GM10248 (cell line): ENCODE measurements at regions of chr3 and their contacts with region 1.

Region 1: DNA sequence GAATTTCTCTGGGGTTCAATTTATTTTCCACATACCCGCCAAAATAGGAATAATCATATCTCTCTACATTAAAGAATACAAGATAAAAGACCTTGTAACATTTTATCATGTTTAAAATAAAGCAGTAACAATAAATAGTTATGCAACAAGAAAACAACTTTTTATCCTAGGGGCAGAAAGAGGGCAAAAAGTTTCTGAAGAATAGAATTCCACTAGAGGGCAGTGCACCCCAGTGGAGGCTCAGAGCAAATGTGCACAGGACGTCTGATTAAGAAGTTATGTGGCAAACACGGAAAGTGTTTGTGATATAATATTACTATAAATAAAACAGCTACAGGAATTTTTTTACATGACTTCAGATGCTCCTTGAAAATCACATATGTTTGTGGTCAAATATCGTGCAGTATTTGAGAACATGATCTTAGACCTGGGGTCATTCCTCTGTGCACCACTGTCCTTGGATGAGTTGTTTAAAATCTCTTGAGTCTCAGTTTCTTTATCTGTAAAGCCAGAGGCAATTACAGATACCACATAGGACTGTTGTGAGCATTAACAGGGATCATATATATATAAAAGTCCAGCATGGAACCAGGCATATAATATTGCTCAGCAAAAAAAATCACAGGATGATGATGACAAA is 13.2 kb upstream of the PIK3R4 start:
- DNase-seq: peak; percentile 67
- CTCF ChIP-seq: peak; percentile 51

Region 2: GRCh38 chr3:130707902-130708601 is 51.8 kb before region 1 on chr3:
- CTCF ChIA-PET with region 1: no interaction called
- POLR2A ChIA-PET with region 1: no interaction called
- DNase-seq: no peak
- CTCF ChIP-seq: no peak

Region 3: GRCh38 chr3:130748981-130749380 is 10.8 kb before region 1 on chr3:
- CTCF ChIA-PET with region 1: interaction called, 12 read pairs
- POLR2A ChIA-PET with region 1: no interaction called
- DNase-seq: no peak
- CTCF ChIP-seq: no peak

Region 4: GRCh38 chr3:130773366-130773765 is 13.5 kb after region 1 on chr3:
- CTCF ChIA-PET with region 1: interaction called, 24 read pairs
- POLR2A ChIA-PET with region 1: no interaction called
- DNase-seq: no peak
- CTCF ChIP-seq: no peak

Region 5: DNA sequence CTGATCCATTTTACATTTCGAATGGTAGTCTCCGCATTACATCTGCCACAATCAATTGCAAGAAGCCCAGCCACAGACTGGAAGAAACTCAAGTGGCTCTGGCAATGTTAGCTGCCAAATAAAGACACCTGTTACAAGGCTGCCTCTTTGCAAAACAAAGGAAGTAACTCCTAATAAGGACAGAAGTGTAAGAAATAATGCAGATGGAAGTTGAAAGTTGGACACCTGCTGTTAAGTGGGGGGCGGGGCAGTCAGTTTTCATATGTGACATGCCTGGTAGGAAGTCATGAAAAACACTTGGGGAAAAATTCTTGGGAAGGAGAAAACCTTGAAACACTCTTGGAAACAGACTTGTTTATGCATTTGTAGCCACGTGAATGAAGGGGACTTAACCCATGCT is 80.0 kb after region 1 on chr3:
- CTCF ChIA-PET with region 1: interaction called, 10 read pairs
- POLR2A ChIA-PET with region 1: no interaction called
- DNase-seq: peak; percentile 25
- CTCF ChIP-seq: no peak

Region 6: DNA sequence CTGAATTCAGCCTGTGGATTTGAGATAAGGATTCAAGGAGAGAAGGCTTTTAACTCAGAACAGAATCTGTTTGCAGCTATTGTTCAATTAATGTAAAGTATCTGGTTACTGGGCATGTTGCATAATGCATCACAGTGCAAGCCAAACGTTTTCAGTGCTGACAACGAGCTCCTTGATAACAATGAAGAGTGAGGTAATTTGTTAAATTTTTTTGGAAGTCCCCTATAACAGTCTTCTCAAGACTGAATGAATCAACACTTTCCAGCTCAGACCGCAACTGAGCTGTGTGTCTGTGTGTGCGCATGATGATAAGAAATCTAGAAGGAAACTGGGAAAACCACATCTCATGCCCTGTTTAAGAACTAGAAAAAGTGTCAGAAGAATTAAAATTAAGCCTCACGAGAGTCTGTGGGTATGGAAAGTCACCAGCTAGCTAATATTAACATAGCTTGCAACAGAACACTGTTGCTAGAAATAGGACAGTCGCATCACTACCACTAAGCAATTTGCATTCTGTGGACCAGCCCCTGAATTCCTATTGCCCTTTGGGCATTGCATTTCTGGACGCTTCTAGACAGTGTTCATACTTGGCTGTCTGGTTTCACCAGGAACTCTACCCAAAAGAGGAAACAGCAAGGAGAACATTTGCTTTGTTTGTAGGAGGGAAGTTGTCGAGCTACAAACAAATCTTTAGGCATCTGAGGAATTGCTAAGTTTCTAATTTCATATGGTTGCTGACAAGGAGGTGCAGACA is 90.4 kb after region 1 on chr3:
- CTCF ChIA-PET with region 1: interaction called, 15 read pairs
- POLR2A ChIA-PET with region 1: no interaction called
- DNase-seq: peak; percentile 42
- CTCF ChIP-seq: no peak

Region 7: DNA sequence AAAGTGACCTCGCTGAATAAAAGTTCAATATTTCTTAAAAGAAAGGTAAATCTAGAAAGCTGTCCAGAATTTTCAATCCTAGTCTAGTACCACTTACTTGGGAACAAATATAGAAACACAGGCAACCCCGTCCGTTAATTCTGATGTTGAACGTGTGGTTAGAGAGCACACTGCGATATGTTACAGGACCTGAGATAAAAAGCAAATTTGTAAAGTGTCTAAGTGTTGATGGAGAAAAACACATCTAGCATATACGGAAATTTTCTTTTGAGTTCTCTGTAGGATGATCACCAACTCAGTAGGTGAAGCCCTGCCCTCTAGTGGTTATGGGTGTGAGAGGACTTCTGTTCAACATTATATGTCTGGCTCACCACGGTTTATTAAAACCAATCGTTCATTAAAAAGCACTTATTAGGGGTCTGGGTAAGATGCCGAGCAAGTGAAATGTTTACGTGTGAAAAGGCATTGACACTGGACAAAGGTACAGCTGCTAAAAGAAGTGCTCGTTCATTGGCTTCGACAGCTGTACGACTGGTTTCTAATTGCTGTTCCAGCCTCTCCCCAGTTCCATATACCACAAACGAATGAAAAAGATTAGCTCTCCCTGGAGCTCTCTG is 133.0 kb after region 1 on chr3:
- CTCF ChIA-PET with region 1: interaction called, 91 read pairs
- POLR2A ChIA-PET with region 1: interaction called, 3 read pairs
- DNase-seq: peak; percentile 64
- CTCF ChIP-seq: peak; percentile 75

Region 8: DNA sequence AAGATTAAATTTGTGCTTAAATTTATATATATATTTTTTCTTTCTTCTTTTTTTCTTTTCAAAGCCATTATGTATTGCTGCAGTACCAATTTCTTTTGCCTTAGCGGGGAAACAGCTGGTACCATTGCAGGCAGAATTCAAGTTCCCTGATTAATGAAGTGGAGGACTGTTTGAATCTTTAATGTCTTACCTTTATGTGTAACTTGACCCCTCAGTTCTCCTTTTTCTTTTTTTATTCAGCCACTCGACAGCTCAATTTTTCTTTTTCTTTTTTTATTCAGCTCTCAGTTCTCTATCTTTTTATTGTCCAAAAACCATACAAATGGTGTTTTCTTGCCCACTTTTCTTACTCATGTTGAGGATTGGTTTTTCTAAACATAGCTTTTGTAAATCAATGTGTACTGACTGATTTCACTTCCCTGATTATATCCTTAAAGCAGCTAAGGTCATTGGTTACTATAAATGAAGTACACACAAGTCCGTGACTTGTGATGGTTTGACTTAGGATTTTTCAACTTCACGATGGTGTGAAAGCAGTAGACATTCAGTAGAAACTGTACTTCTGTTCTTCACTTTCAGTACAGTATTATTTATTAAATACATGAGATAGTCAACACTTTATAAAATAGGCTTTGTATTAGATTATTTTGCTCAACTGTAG is 156.8 kb after region 1 on chr3:
- CTCF ChIA-PET with region 1: no interaction called
- POLR2A ChIA-PET with region 1: no interaction called
- DNase-seq: peak; percentile 28
- CTCF ChIP-seq: no peak